ENCODE measurements at regions of chr3 and their contacts with region 1.

Region 1: DNA sequence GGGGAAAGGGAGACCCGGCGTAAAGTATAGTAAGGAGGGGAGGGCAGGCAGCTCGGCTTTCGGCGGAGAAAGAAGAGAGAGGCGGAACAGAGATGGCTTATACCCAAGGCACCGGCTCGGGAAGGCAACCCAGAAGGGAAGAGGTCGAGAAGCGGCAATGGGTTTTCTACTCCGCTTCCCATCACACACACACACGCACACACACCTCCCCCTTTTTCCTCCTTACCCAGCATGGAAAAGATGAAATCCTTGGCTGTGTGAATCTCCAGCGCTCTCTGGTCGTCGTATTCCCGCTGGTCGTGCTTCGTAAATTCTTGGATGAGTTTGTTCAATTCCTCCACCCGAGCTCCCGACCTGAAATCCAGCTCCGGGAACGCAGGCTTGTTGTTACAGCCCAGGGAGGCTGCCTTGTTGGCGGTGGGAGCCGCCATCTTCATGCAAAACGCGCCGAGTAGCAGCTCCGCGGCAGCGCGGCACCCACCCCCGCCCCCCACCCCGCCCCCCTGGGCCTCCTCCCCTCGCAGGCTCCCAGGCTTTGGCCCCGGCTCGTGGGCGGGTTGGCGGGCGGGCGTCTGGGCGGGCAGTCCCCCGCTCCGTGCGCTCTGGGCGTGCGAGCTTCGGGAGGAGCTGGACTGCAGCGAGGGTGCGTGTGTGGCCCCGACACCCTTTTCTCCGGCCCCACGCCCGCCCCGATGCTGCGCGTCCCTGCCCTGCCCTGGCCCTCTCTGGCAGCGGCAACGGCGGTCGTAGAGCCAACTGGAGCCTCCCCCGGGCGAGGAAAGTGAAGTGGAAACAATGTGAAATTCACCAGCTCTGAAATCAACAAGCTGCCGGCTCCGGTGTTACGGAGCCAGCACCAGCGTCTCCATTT is at the start of gene MB21D2:
- DNase-seq: peak; percentile 89
- H3K4me3 ChIP-seq: peak within 1 kb of the TSS; percentile 50 to 89 (median 60)
- H3K27ac ChIP-seq: peak within 1 kb of the TSS; percentile 80
- H3K4me1 ChIP-seq: peaks cover 9% of the 10 kb centered on the region
- H3K27me3 ChIP-seq: no peaks in the 10 kb centered on the region
- CTCF ChIP-seq: no peak
- POLR2A ChIP-seq: peak; percentile 66
- total RNA-seq, gene MB21D2: 7.2 and 7.4 TPM in 2 replicates

Region 2: DNA sequence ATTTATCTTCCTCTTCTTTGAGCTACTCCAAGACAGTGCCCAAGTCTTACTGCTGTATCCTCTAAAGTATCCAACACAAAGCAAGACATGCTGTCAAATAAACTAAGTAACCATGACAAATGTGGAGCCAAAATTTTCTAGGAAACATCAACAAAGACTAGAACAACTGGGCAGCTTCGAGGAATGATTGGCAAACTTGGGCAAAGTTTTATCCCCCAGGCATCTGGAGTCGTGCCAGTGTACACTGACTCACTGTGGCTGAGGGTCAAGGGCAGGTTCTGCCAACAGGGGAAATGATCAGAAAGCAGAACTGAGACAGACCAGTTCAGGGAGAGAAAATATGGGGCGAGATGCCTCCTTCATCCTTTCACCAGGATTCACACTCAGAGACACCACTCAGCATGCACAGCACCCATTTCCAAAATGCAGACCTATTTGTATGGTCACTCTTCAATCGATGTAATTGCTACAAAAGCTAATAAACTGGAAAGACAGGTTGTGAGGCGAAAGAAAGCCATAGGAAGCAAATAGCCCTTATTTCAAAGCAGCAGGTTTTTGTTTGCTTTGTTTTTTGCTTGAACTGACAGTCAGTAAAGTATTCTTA is 65.7 kb before region 1 on chr3:
- CTCF ChIA-PET with region 1: interaction called, 11 read pairs
- POLR2A ChIA-PET with region 1: interaction called, 4 read pairs
- dilution Hi-C with region 1: no loop called
- intact Hi-C with region 1: loop called (anchors 2 kb)
- DNase-seq: peak; percentile 92
- H3K4me3 ChIP-seq: no peak overlapping the region
- H3K27ac ChIP-seq: no peak overlapping the region
- H3K4me1 ChIP-seq: peaks cover 33% of the 10 kb centered on the region
- H3K27me3 ChIP-seq: no peaks in the 10 kb centered on the region
- CTCF ChIP-seq: no peak
- POLR2A ChIP-seq: no peak

Region 3: DNA sequence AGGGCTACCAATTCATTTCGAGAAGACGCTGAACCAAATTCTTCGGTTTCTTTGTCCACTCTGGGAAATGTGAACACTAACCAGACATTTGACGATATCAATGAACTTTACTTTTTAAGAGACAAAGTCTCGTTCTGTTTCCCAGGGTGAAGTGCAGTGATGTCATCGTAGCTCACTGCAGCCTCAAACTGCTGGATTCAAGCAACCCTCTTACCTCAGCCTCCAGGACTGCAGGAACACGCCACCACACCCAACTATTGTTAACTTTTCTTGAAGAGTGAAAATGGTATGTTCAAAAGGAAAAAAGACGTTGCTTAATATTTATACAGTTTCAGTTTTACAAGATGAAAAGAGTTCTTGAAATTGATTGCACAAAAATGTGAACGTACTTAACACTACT is 30.6 kb before region 1 on chr3:
- CTCF ChIA-PET with region 1: interaction called, 23 read pairs
- POLR2A ChIA-PET with region 1: interaction called, 10 read pairs
- dilution Hi-C with region 1: no loop called
- intact Hi-C with region 1: loop called (anchors 1 kb)
- DNase-seq: peak; percentile 58
- H3K4me3 ChIP-seq: peak overlapping the region in 1 of 3 experiments; percentile 30
- H3K27ac ChIP-seq: peak overlapping the region; percentile 91
- H3K4me1 ChIP-seq: peaks cover 73% of the 10 kb centered on the region
- H3K27me3 ChIP-seq: no peaks in the 10 kb centered on the region
- CTCF ChIP-seq: no peak
- POLR2A ChIP-seq: no peak

Region 4: DNA sequence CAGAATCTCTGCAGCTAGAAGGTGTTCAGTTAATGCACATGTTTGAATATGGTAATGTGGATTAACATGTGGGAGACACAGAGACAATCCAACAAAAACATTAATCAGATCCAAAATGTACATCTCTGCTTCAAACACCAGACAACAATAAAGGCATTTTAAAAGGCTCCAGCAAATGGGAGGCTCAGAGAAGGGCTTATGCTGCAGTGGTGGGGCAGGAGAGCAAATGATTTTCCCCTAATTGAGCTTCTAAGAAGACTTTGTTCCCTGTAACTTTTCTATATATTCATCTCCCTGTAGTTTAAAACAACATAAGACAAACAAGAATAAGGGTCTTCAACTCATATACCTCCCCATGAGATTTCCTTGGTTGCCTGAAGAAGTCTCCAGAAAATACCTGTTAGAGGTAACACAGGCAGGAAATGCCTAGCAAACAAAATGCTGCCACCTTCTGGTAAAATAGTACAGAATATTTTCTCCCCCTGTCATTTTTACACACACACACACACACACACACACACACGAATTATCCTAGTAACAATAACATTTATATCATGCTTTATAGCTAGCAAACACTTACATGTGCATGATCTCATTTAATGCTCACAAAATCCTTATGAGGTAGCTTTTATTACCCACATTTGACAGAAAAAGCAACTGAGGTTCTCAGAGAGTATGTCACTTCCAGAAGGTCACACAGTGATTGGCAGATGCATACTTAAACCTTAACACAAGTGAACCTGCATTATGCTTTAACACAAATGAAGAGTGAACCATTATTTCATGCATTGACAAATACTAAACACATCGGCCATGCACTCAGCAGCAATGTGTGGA is 123.4 kb after region 1 on chr3:
- CTCF ChIA-PET with region 1: interaction called, 15 read pairs
- POLR2A ChIA-PET with region 1: no interaction called
- dilution Hi-C with region 1: no loop called
- intact Hi-C with region 1: loop called (anchors 1 kb)
- DNase-seq: peak; percentile 43
- H3K4me3 ChIP-seq: no peak overlapping the region
- H3K27ac ChIP-seq: no peak overlapping the region
- H3K4me1 ChIP-seq: no peaks in the 10 kb centered on the region
- H3K27me3 ChIP-seq: no peaks in the 10 kb centered on the region
- CTCF ChIP-seq: peak; percentile 15
- POLR2A ChIP-seq: no peak

Region 5: DNA sequence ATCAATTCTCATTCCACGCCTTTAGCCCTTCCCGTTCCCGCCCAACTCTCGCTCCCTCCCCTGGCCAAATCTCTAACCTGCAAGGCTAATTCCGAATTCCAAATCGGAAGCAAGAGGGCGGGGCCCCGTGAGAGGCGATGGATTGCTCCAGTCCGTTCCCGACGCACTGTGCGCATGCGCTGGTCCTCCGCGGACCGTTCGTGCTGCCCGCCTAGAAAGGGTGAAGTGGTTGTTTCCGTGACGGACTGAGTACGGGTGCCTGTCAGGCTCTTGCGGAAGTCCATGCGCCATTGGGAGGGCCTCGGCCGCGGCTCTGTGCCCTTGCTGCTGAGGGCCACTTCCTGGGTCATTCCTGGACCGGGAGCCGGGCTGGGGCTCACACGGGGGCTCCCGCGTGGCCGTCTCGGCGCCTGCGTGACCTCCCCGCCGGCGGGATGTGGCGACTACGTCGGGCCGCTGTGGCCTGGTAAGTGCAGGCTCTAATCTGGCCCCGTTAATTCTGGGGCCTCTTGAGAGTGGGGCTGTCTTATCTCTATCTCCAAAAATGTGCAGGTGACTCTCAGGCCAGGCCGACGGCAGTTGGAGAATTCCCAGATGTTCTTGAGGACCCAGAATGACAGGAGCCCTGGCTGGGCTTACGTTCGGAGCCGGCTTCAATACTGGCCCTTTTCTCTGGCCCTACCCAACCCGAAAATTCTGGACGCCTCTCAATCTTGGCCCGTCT is 675.5 kb after region 1 on chr3 and contains the start of gene OPA1:
- CTCF ChIA-PET with region 1: no interaction called
- POLR2A ChIA-PET with region 1: no interaction called
- dilution Hi-C with region 1: no loop called
- intact Hi-C with region 1: loop called (anchors 2 kb)
- DNase-seq: peak; percentile 98
- H3K4me3 ChIP-seq: peak within 1 kb of the TSS; percentile 56 to 94 (median 85)
- H3K27ac ChIP-seq: peak within 1 kb of the TSS; percentile 80
- H3K4me1 ChIP-seq: peaks cover 18% of the 10 kb centered on the region
- H3K27me3 ChIP-seq: no peaks in the 10 kb centered on the region
- CTCF ChIP-seq: peak in 1 of 2 donors; percentile 24
- POLR2A ChIP-seq: peak; percentile 75
- total RNA-seq, gene OPA1: 57.8 and 62.0 TPM in 2 replicates